Esophagus muscularis mucosa (tissue), 4 donors: ENCODE measurements at regions of chr9 and their contacts with region 1.

Region 1: DNA sequence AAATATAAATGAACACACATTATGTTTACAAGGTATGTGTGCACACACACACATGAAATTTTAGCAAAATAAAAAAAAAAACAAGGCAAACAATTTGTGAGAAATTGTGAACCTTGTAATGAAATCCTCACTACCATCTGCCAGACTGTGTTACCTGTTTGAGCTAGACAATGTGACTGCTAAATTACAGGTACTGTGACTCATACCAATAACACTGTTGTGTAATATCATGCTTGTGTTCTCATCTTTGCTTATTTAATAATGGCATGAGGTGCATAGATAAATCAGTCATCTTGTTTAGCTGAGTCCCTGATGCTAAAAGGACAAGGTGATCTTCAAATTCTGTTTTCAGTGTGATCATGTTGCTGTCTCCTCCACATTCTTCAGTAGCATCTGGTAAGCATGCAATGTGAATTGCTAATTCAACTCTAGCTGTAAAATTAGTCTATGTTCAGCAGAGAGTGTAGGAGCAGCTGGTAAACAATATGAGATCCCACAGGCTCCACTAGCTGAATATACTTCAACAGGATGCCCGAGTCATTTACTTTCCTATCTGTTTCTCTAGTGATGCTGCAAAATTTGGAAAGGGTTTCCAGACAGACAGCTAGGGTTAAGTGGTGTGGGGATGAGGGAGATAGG is 966.3 kb upstream of the C9orf72 start:
- DNase-seq: no peak
- H3K4me3 ChIP-seq: no peak overlapping the region
- H3K27ac ChIP-seq: no peak overlapping the region
- H3K4me1 ChIP-seq: no peaks in the 10 kb centered on the region
- H3K27me3 ChIP-seq: no peaks in the 10 kb centered on the region
- CTCF ChIP-seq: no peak
- EP300 ChIP-seq: no peak
- POLR2A ChIP-seq: no peak

Region 2: DNA sequence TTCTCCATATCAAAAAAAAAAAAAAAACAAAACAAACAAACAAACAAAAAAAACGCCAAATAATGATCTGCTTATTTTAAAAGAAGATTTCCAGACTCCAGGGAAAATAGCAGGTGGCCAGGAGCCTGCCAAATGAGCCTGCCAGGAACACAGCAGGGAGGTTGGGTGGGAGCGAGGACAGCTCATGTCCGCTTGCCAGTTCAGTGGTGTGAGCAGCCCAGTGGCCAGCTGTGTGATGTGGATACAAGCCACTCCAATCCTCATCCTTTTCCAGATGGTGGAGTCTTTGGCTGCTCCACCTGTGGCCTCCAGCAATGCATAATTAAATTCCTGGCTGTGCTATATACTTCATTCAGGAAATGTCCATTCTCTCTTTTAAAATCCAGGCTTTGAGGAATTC is 58.9 kb after region 1 on chr9:
- intact Hi-C with region 1: loop called (anchors 10 kb)
- DNase-seq: no peak
- H3K4me3 ChIP-seq: no peak overlapping the region
- H3K27ac ChIP-seq: no peak overlapping the region
- H3K4me1 ChIP-seq: peaks cover 0 to 2% (median 0%) of the 10 kb centered on the region in 4 donors
- H3K27me3 ChIP-seq: no peaks in the 10 kb centered on the region
- CTCF ChIP-seq: no peak
- EP300 ChIP-seq: no peak
- POLR2A ChIP-seq: no peak